ENCODE measurements at regions of chr1 and their contacts with region 1.

Region 1: DNA sequence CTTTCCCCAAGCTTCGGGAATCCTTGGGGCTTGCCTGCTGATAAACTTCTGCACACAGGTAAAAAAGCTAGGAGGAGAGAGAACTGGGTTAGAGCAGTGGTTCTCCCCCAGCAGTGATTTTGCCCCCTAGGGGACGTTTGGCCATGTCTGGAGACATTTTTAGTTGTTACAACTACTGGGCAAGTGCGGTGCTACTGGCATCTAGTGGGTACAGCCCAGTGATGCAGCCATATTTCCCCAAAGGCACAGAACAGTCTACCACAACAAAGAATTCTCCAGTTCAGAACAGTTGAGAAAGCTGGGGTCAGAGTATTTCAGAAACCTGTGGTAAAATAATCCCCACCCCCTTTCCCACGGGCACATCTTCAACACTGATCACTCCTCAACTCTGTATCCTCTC is 41.3 kb downstream of the LRRC71 start:
- DNase-seq: peak; percentile 64
- ATAC-seq: peak; percentile 79
- H3K4me3 Mint-ChIP-seq: no peak overlapping the region
- H3K27ac Mint-ChIP-seq: no peak overlapping the region
- H3K4me1 Mint-ChIP-seq: peaks cover 22% of the 10 kb centered on the region
- H3K27me3 Mint-ChIP-seq: no peaks in the 10 kb centered on the region
- CTCF ChIP-seq: peak; percentile 68

Region 2: DNA sequence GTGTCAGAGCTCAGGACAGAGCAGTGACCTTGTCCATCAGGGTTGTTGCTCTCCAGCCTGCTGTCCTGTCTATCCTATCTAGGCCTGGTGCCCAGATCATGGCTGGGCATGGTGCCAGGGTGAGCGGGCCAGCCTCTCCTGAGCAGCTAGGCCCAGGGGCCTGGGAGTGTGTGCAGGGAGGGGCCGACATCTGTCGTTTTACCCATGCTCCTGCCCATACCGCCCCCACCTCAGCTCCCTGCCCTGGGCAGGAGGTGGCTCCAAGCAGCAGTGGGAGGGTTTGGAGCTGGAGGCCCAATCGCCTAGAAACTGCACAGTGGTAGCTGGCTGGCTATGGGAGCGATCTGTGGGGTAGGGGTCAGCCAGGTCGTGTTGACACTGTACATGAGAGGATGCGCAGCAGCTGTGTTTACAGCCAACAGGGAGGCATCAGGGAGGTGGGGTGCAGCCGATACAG is 109.3 kb before region 1 on chr1:
- CTCF ChIA-PET with region 1: no interaction called
- POLR2A ChIA-PET with region 1: no interaction called
- intact Hi-C with region 1: no loop called
- DNase-seq: no peak
- ATAC-seq: no peak
- H3K4me3 Mint-ChIP-seq: no peak overlapping the region
- H3K27ac Mint-ChIP-seq: no peak overlapping the region
- H3K4me1 Mint-ChIP-seq: peaks cover 21% of the 10 kb centered on the region
- H3K27me3 Mint-ChIP-seq: peaks cover 8% of the 10 kb centered on the region
- CTCF ChIP-seq: no peak

Region 3: GRCh38 chr1:156948708-156949107 is 13.0 kb before region 1 on chr1:
- CTCF ChIA-PET with region 1: interaction called, 10 read pairs
- POLR2A ChIA-PET with region 1: interaction called, 12 read pairs
- intact Hi-C with region 1: no loop called
- DNase-seq: no peak
- ATAC-seq: no peak
- H3K4me3 Mint-ChIP-seq: no peak overlapping the region
- H3K27ac Mint-ChIP-seq: no peak overlapping the region
- H3K4me1 Mint-ChIP-seq: no peaks in the 10 kb centered on the region
- H3K27me3 Mint-ChIP-seq: no peaks in the 10 kb centered on the region
- CTCF ChIP-seq: no peak

Region 4: GRCh38 chr1:156980551-156980950 is 18.8 kb after region 1 on chr1:
- CTCF ChIA-PET with region 1: no interaction called
- POLR2A ChIA-PET with region 1: no interaction called
- intact Hi-C with region 1: no loop called
- DNase-seq: no peak
- ATAC-seq: no peak
- H3K4me3 Mint-ChIP-seq: no peak overlapping the region
- H3K27ac Mint-ChIP-seq: no peak overlapping the region
- H3K4me1 Mint-ChIP-seq: no peaks in the 10 kb centered on the region
- H3K27me3 Mint-ChIP-seq: peaks cover 7% of the 10 kb centered on the region
- CTCF ChIP-seq: no peak